ENCODE measurements at regions of chr1 and their contacts with region 1.

Region 1: GRCh38 chr1:151693076-151693651 is 23.4 kb downstream of the CELF3 start:
- DNase-seq: no peak
- ATAC-seq: peak; percentile 73; the same call in 1 of the 2 replicates
- H3K4me3 Mint-ChIP-seq: no peak overlapping the region
- H3K27ac Mint-ChIP-seq: no peak overlapping the region
- H3K4me1 Mint-ChIP-seq: no peaks in the 10 kb centered on the region
- H3K27me3 Mint-ChIP-seq: no peaks in the 10 kb centered on the region
- CTCF ChIP-seq: no peak

Region 2: DNA sequence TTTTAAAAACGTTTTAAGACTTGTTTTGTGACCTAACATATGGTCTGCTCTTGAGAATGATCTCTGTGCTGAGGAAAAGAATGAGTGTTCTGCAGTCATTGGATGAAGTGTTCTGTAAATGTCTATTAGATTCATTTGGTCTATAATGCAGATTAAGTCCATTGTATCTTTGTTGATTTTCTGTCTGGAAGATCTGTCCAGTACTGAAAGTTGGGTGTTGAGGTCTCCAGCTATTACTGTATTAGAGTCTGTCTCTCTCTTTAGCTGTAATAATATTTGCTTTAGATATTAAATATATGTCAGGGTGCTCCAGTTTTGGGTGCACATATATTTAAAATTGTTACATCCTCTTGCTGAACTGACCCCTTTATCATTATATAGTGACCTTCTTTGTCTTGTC is 19.8 kb before region 1 on chr1:
- CTCF ChIA-PET with region 1: no interaction called
- POLR2A ChIA-PET with region 1: no interaction called
- DNase-seq: no peak
- ATAC-seq: no peak
- H3K4me3 Mint-ChIP-seq: no peak overlapping the region
- H3K27ac Mint-ChIP-seq: no peak overlapping the region; the same call in 1 of the 2 replicates
- H3K4me1 Mint-ChIP-seq: peaks cover 5% of the 10 kb centered on the region
- H3K27me3 Mint-ChIP-seq: no peaks in the 10 kb centered on the region
- CTCF ChIP-seq: no peak

Region 3: GRCh38 chr1:151720974-151721787 is 28.0 kb after region 1 on chr1 and contains the start of gene RIIAD1:
- CTCF ChIA-PET with region 1: interaction called, 19 read pairs
- POLR2A ChIA-PET with region 1: interaction called, 3 read pairs
- DNase-seq: peak; percentile 61
- ATAC-seq: peak; percentile 85
- H3K4me3 Mint-ChIP-seq: peak within 1 kb of the TSS; percentile 76
- H3K27ac Mint-ChIP-seq: no peak within 1 kb of the TSS
- H3K4me1 Mint-ChIP-seq: peaks cover 31% of the 10 kb centered on the region
- H3K27me3 Mint-ChIP-seq: peaks cover 81% of the 10 kb centered on the region
- CTCF ChIP-seq: no peak
- total RNA-seq, gene RIIAD1: 0.92 TPM in 1 of 3 replicates, not detected in the others

Region 4: DNA sequence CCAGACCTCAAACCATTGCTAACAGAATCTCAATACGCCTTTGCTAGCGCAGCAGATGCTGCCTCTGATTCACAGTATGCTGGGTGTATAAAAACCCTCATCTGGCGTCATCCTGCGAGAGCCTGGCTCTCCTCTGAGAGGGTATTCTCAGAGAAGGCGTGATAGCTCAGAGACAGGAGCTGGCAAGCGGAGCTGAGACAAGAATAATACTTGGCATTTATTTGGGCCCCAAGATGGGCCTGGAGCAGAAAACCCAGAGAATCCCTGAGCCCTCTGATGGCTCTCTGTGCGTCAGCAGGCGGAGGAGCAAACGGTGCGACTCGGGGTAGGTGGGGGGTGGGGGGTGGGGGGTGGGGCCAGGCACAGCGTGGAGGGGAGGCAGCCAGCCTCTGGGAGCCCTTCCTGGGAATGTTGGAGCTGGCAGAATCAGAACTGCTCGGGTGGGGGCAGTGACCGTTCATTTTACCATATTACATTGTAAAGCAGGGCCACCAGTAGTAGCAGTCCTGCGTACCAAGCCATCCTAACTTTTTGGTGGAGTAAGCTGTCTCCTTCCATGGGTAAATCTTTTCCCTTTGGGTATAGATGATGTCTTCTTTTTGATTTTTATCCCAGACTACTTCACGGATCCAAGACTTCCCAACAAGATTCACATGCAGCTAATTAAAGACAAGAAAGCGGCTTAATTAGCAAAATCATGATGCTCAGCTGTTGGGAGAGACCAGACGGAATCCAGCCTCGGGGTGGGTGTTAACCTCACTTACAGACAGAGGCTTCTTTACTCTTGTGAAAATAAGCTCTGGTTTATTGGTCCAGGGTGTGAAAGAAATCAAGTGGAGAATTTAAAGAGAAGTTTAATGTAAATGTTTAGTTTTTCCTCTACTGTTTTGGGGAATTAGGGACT is 35.2 kb after region 1 on chr1:
- CTCF ChIA-PET with region 1: interaction called, 24 read pairs
- POLR2A ChIA-PET with region 1: no interaction called
- DNase-seq: no peak
- ATAC-seq: peak; percentile 75
- H3K4me3 Mint-ChIP-seq: peak overlapping the region; percentile 37
- H3K27ac Mint-ChIP-seq: no peak overlapping the region
- H3K4me1 Mint-ChIP-seq: peaks cover 32% of the 10 kb centered on the region
- H3K27me3 Mint-ChIP-seq: peaks cover 22% of the 10 kb centered on the region
- CTCF ChIP-seq: no peak

Measured in WTC11 (cell line).